Activated CD8-positive, alpha-beta memory T cell treated with anti-CD3 and anti-CD28 coated beads, Interleukin-2, amount 10 ng/mL, durations not matched to agents 7 days and 5 days (primary cell): ENCODE measurements at regions of chr11 and their contacts with region 1.

Region 1: DNA sequence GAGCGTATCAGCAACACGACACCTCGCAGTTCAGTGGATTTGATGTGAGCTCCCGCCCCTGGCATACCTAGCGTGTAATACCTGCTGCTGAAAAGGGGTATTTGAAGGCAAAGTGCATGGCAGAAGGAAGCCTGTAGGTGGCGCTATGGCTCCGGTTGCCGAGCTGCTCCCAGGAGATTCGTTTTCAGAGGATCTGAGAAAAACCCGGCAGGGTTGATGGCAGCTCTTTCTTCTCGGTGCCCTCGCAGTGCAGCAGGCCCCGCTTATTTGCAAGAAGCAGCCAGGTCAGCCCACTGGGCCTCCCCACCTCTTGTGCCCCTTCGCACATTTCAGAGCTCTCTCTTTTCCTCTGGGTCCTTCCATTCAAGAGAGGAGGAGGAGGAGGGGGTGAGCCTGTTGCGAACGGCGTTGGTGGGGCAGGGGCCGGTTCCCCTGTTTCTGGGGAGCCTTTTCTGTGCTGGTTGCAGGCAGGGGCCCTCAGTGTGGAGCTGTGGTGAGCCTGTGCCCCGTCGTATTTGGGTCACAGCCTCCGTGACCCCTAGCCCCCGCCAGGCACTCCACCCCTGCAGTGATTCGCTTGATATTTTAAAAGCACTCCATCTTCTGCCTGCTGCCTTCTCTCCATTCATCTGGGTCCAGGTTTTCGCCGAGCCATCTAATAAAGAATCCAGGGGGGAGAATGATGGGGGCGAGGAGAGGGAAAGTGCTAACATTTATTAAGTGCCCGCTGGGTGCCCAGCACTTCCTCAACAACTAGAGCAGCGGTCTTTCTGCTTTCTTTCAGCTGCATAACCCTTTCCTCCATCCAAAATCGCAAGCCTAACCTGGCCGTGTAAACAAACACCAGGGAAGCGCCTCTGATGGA is 85.3 kb upstream of the SYT13 start:
- DNase-seq: peak; percentile 68
- ATAC-seq: peak; percentile 59
- H3K4me3 Mint-ChIP-seq: no peak overlapping the region
- H3K27ac Mint-ChIP-seq: no peak overlapping the region
- H3K4me1 Mint-ChIP-seq: peaks cover 8% of the 10 kb centered on the region
- H3K27me3 Mint-ChIP-seq: peaks cover 18% of the 10 kb centered on the region

Region 2: GRCh38 chr11:45354976-45355705 is 16.3 kb before region 1 on chr11:
- CTCF ChIA-PET with region 1: interaction called, 13 read pairs
- DNase-seq: peak; percentile 88
- ATAC-seq: peak; percentile 90
- H3K4me3 Mint-ChIP-seq: peak overlapping the region; percentile 70
- H3K27ac Mint-ChIP-seq: peak overlapping the region; percentile 71
- H3K4me1 Mint-ChIP-seq: peaks cover 14% of the 10 kb centered on the region
- H3K27me3 Mint-ChIP-seq: peaks cover 20% of the 10 kb centered on the region

Region 3: GRCh38 chr11:45655347-45655756 is 283.9 kb after region 1 on chr11:
- CTCF ChIA-PET with region 1: interaction called, 13 read pairs
- DNase-seq: peak; percentile 66
- ATAC-seq: peak; percentile 59
- H3K4me3 Mint-ChIP-seq: no peak overlapping the region
- H3K27ac Mint-ChIP-seq: no peak overlapping the region
- H3K4me1 Mint-ChIP-seq: peaks cover 7% of the 10 kb centered on the region
- H3K27me3 Mint-ChIP-seq: peaks cover 35% of the 10 kb centered on the region